ENCODE measurements at regions of chr7 and their contacts with region 1.

Region 1: GRCh38 chr7:129755555-129755954 is 144.0 kb downstream of the NRF1 start:
- DNase-seq: no peak
- H3K4me3 ChIP-seq: no peak overlapping the region
- H3K27ac ChIP-seq: no peak overlapping the region
- H3K4me1 ChIP-seq: peaks cover 10% of the 10 kb centered on the region
- H3K27me3 ChIP-seq: no peaks in the 10 kb centered on the region
- CTCF ChIP-seq: no peak

Region 2: DNA sequence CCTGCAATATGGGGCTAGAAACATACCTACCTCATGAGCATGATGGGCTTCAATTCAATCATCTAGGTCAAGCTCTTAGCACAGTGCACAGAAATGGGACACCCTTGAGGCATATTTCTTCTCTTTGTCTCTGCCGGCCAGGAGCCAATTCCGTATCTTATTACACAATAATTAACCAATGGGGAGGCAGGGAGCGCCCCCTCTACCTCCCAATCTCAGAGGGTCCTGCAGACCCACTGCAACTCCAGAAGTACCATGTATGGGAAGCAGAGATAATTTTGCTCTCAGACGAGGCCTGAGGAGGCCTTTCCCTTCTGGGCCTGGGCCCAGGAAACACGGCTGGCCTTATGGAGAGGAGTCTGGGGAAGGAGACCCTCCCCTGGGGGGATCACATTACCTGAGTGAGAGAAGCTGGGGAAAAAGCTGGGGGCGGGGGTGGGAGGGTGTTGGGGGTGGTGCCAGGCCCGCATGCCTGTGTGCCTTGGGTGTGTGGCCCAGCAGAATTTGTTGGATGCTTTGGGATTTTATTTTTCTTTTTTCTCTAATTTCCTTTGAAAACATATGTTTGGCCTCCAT is 41.7 kb after region 1 on chr7:
- CTCF ChIA-PET with region 1: no interaction called
- dilution Hi-C with region 1: loop called (anchors 5 kb)
- in situ Hi-C with region 1: no loop called
- intact Hi-C with region 1: no loop called
- DNase-seq: no peak
- H3K4me3 ChIP-seq: no peak overlapping the region
- H3K27ac ChIP-seq: no peak overlapping the region
- H3K4me1 ChIP-seq: no peaks in the 10 kb centered on the region
- H3K27me3 ChIP-seq: no peaks in the 10 kb centered on the region
- CTCF ChIP-seq: no peak

Measured in mammary epithelial cell (primary cell).